ENCODE measurements at regions of chr16 and their contacts with region 1.

Region 1: GRCh38 chr16:81723098-81723723 is 55.9 kb upstream of the PLCG2 start:
- DNase-seq: peak; percentile 43
- H3K4me3 Mint-ChIP-seq: no peak overlapping the region
- H3K27ac Mint-ChIP-seq: no peak overlapping the region
- H3K4me1 Mint-ChIP-seq: peaks cover 18% of the 10 kb centered on the region
- H3K27me3 Mint-ChIP-seq: peaks cover 24% of the 10 kb centered on the region

Region 2: DNA sequence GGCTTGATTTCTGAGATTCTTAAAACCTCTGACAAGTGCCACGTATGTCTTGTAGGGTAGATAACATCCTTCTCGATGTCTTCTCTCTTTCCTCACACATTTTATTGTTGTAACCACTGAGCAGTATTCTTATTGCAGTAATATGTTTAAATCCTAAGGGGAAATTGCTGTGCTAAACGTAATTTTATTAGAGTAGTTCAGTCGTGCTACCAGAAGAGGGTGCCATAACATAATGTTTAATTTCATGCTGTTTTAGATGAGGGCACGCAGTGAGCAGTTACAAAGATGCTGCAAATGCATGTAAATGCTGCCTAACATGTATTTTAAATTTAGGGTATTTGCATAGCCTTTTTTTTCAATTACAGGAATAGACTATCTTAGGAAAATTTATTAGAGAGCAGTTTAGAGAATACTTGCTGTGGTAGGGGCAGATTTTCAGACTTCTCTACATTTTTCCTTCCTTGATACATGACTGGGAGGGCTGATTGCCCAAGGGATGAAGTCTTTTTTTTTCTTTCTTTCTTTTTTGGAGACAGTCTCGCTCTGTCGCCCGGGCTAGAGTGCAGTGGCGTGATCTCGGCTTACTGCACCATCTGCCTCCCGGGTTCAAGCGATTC is 356.8 kb before region 1 on chr16:
- CTCF ChIA-PET with region 1: interaction called, 32 read pairs
- DNase-seq: no peak
- H3K4me3 Mint-ChIP-seq: no peak overlapping the region
- H3K27ac Mint-ChIP-seq: no peak overlapping the region
- H3K4me1 Mint-ChIP-seq: peaks cover 4% of the 10 kb centered on the region
- H3K27me3 Mint-ChIP-seq: no peaks in the 10 kb centered on the region

Region 3: GRCh38 chr16:81403616-81404373 is 319.4 kb before region 1 on chr16:
- CTCF ChIA-PET with region 1: interaction called, 21 read pairs
- DNase-seq: peak; percentile 86
- H3K4me3 Mint-ChIP-seq: no peak overlapping the region
- H3K27ac Mint-ChIP-seq: no peak overlapping the region
- H3K4me1 Mint-ChIP-seq: peaks cover 3% of the 10 kb centered on the region
- H3K27me3 Mint-ChIP-seq: peaks cover 27% of the 10 kb centered on the region

Region 4: GRCh38 chr16:81537721-81538561 is 185.3 kb before region 1 on chr16:
- CTCF ChIA-PET with region 1: no interaction called
- DNase-seq: no peak
- H3K4me3 Mint-ChIP-seq: no peak overlapping the region
- H3K27ac Mint-ChIP-seq: peak overlapping the region; percentile 19
- H3K4me1 Mint-ChIP-seq: no peaks in the 10 kb centered on the region
- H3K27me3 Mint-ChIP-seq: no peaks in the 10 kb centered on the region

Region 5: GRCh38 chr16:81623363-81624102 is 99.7 kb before region 1 on chr16:
- CTCF ChIA-PET with region 1: interaction called, 43 read pairs
- DNase-seq: peak; percentile 72
- H3K4me3 Mint-ChIP-seq: no peak overlapping the region
- H3K27ac Mint-ChIP-seq: no peak overlapping the region
- H3K4me1 Mint-ChIP-seq: peaks cover 3% of the 10 kb centered on the region
- H3K27me3 Mint-ChIP-seq: no peaks in the 10 kb centered on the region

Region 6: DNA sequence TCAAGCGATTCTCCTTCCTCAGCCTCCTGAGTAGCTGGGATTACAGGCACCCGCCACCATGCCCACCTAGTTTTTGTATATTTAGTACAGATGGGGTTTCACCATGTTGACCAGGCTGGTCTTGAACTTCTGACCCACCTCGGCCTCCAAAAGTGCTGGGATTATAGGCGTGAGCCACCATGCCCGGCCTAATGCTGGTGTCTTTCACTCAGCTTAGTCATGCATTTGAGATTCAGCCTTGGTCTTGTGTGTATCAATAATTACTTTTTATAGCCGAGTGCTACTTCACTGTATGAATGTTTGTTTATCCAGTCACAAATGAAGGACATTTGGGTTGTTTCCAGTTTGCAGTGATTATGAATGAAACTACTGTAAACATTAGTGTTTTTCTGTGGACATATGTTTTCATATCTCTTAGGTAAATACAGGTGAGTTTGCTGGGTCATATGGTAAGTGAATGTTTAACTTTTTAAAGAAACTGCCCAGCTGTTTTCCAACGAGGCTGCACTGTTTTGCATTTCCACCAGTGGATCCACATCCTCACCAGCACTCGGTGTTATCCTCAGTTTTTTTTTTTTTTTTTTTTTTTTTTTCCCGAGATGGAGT is 44.9 kb after region 1 on chr16:
- CTCF ChIA-PET with region 1: no interaction called
- DNase-seq: no peak
- H3K4me3 Mint-ChIP-seq: no peak overlapping the region
- H3K27ac Mint-ChIP-seq: no peak overlapping the region
- H3K4me1 Mint-ChIP-seq: no peaks in the 10 kb centered on the region
- H3K27me3 Mint-ChIP-seq: peaks cover 23% of the 10 kb centered on the region